ENCODE measurements at regions of chr6 and their contacts with region 1.

Region 1: DNA sequence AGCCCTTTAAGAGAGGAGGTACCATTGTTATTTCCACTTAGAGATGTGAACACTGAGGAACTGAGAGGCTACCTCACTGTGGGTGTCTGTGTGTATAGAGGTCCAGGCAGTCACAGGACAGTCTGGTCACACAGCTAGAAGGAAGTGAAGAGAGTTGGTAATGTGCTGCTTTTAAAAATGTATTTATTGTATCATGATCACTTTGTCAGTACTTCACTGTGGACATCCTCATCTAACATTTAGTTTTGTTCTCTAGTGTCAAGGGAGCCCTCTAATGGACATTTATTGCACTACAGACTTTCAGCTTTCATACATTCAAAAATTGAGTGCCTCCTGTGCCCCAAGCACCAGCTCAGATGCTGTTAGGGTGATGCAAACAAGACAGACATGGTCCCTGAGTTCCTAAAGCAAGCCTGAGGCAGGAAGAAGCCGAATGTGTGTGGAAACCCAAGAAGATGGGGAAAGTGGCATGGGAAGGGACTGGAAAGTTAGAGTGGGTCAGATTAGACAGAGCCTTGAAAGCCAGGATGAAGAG is 123.0 kb downstream of the SLC16A10 start:
- DNase-seq: peak in 15 of 35 experiments; percentile 1 to 75 (median 6)
- ATAC-seq: peak; percentile 64 to 80 (median 71)
- H3K4me3 ChIP-seq: no peak overlapping the region
- H3K4me3 Mint-ChIP-seq: no peak overlapping the region
- H3K27ac ChIP-seq: no peak overlapping the region
- H3K27ac Mint-ChIP-seq: no peak overlapping the region
- H3K4me1 ChIP-seq: no peaks in the 10 kb centered on the region
- H3K4me1 Mint-ChIP-seq: peaks cover 0 to 13% (median 0%) of the 10 kb centered on the region in 3 donors
- H3K27me3 ChIP-seq: no peaks in the 10 kb centered on the region
- H3K27me3 Mint-ChIP-seq: no peaks in the 10 kb centered on the region

Region 2: DNA sequence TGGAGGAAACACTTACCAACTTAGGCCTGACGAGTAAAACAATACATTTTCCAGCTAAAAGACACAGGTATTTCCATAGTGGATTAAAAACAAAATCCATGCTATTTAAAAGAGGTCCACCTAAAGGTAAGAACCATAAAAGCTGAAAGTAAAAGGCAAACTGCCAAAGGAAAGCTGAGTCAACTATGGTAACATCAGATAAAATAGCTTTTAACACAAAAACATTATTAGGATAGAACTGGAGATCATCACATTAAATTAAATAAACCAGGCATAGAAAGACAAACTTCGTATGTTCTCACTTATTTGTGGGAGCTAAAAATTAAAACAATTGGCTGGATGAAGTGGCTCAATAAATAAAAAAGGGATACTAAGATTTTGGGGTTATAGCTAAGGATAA is 567.1 kb before region 1 on chr6:
- CTCF ChIA-PET with region 1: interaction called in 1 of 2 experiments, 11 read pairs
- POLR2A ChIA-PET with region 1: no interaction called
- DNase-seq: no peak
- ATAC-seq: no peak
- H3K4me3 ChIP-seq: no peak overlapping the region
- H3K4me3 Mint-ChIP-seq: no peak overlapping the region
- H3K27ac ChIP-seq: no peak overlapping the region
- H3K27ac Mint-ChIP-seq: no peak overlapping the region
- H3K4me1 ChIP-seq: no peaks in the 10 kb centered on the region
- H3K4me1 Mint-ChIP-seq: no peaks in the 10 kb centered on the region
- H3K27me3 ChIP-seq: no peaks in the 10 kb centered on the region
- H3K27me3 Mint-ChIP-seq: no peaks in the 10 kb centered on the region

Region 3: GRCh38 chr6:111011360-111012142 is 198.7 kb before region 1 on chr6:
- CTCF ChIA-PET with region 1: interaction called, 6 to 21 read pairs
- POLR2A ChIA-PET with region 1: no interaction called
- DNase-seq: peak in 4 of 35 experiments; percentile 3 to 64 (median 10)
- ATAC-seq: peak in 3 of 4 experiments; percentile 34 to 55 (median 45)
- H3K4me3 ChIP-seq: no peak overlapping the region
- H3K4me3 Mint-ChIP-seq: no peak overlapping the region
- H3K27ac ChIP-seq: no peak overlapping the region
- H3K27ac Mint-ChIP-seq: no peak overlapping the region
- H3K4me1 ChIP-seq: no peaks in the 10 kb centered on the region
- H3K4me1 Mint-ChIP-seq: peaks cover 4 to 8% (median 6%) of the 10 kb centered on the region in 3 donors
- H3K27me3 ChIP-seq: no peaks in the 10 kb centered on the region
- H3K27me3 Mint-ChIP-seq: no peaks in the 10 kb centered on the region

Region 4: GRCh38 chr6:111057074-111057752 is 153.0 kb before region 1 on chr6:
- CTCF ChIA-PET with region 1: interaction called, 15 to 41 read pairs
- POLR2A ChIA-PET with region 1: no interaction called
- DNase-seq: peak in 12 of 35 experiments; percentile 3 to 65 (median 10)
- ATAC-seq: peak in 3 of 4 experiments; percentile 62 to 72 (median 66)
- H3K4me3 ChIP-seq: no peak overlapping the region
- H3K4me3 Mint-ChIP-seq: no peak overlapping the region
- H3K27ac ChIP-seq: no peak overlapping the region
- H3K27ac Mint-ChIP-seq: no peak overlapping the region
- H3K4me1 ChIP-seq: no peaks in the 10 kb centered on the region
- H3K4me1 Mint-ChIP-seq: peaks cover 0 to 6% (median 2%) of the 10 kb centered on the region in 3 donors
- H3K27me3 ChIP-seq: no peaks in the 10 kb centered on the region
- H3K27me3 Mint-ChIP-seq: peaks cover 0 to 6% of the 10 kb centered on the region in 2 donors

Region 5: DNA sequence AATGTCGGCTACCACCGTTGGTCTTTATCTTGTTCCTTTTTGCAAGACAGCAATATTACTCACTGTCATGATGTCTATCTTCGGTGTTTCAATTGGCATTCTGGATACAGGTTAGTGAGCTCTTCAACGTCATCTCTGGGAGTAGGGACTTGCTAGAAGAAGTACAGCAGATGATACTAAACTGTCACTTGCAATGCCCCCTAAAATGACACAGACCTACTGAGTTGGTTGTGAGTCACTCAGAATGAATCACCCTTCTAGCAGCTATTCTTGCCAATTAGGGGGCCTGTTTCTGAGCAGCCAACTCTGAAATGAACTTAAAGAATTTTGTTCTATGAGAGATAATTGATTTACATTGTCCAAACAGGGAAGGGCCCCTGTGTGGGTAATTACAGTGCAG is 53.6 kb after region 1 on chr6:
- CTCF ChIA-PET with region 1: no interaction called
- POLR2A ChIA-PET with region 1: no interaction called
- DNase-seq: no peak
- ATAC-seq: no peak
- H3K4me3 ChIP-seq: no peak overlapping the region
- H3K4me3 Mint-ChIP-seq: no peak overlapping the region
- H3K27ac ChIP-seq: no peak overlapping the region
- H3K27ac Mint-ChIP-seq: no peak overlapping the region
- H3K4me1 ChIP-seq: peaks cover 5 to 19% of the 10 kb centered on the region in 2 experiments
- H3K4me1 Mint-ChIP-seq: peaks cover 35 to 53% (median 48%) of the 10 kb centered on the region in 3 donors
- H3K27me3 ChIP-seq: no peaks in the 10 kb centered on the region
- H3K27me3 Mint-ChIP-seq: no peaks in the 10 kb centered on the region